ENCODE measurements at regions of chr1 and their contacts with region 1.

Region 1: GRCh38 chr1:170978371-170978910 is 43.1 kb downstream of the MROH9 start:
- DNase-seq: no peak
- H3K4me3 ChIP-seq: no peak overlapping the region
- H3K27ac ChIP-seq: no peak overlapping the region
- H3K4me1 ChIP-seq: no peaks in the 10 kb centered on the region
- H3K27me3 ChIP-seq: no peaks in the 10 kb centered on the region
- CTCF ChIP-seq: no peak
- POLR2A ChIP-seq: no peak

Region 2: GRCh38 chr1:170917373-170917772 is 61.1 kb before region 1 on chr1:
- intact Hi-C with region 1: no loop called
- DNase-seq: no peak
- H3K4me3 ChIP-seq: no peak overlapping the region
- H3K27ac ChIP-seq: no peak overlapping the region
- H3K4me1 ChIP-seq: no peaks in the 10 kb centered on the region
- H3K27me3 ChIP-seq: no peaks in the 10 kb centered on the region
- CTCF ChIP-seq: no peak
- POLR2A ChIP-seq: no peak

Region 3: DNA sequence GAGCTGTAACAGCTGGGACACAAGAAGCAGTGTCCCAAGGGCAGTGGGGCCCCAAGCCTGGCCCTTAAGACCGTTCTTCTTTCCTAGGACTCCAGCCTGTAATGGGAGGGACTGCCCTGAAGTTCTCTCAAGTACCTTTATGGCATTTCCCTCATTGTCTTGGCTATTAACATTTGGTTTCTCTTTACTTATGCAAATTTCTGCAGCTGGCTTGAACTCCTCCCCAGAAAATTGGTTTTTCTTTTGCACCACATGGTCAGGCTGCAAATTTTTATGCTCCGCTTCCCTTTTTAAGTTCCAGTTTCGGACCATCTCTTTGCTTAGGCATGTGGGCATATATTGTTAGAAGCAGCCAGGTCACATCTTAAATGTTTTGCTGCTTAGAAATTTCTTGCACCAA is 46.2 kb before region 1 on chr1:
- intact Hi-C with region 1: no loop called
- DNase-seq: no peak
- H3K4me3 ChIP-seq: no peak overlapping the region
- H3K27ac ChIP-seq: no peak overlapping the region
- H3K4me1 ChIP-seq: peaks cover 0 to 22% (median 8%) of the 10 kb centered on the region in 3 donors
- H3K27me3 ChIP-seq: no peaks in the 10 kb centered on the region
- CTCF ChIP-seq: no peak
- POLR2A ChIP-seq: no peak

Region 4: DNA sequence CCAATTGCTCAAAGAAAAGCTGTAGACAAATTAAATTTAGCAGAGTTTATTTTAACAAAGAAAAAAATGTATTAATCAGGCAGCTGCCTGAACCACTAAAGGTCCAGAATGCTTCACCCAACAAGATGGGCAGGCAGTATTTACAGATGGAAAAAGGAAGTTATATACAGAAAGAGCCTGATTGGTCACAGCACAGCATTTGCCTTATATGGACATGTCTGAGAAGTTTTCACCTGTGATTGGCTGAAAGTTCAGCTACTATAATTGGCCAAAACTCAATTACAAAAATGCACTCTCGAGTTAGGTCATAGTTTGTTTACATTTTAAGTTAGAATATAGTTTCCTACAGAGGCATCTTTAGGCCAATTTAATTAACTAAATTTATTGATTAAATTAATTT is 254.7 kb after region 1 on chr1:
- intact Hi-C with region 1: loop called (anchors 10 kb)
- DNase-seq: no peak
- H3K4me3 ChIP-seq: no peak overlapping the region
- H3K27ac ChIP-seq: no peak overlapping the region
- H3K4me1 ChIP-seq: no peaks in the 10 kb centered on the region
- H3K27me3 ChIP-seq: no peaks in the 10 kb centered on the region
- CTCF ChIP-seq: no peak
- POLR2A ChIP-seq: no peak

Measured in esophagus squamous epithelium (tissue), 5 donors.